ENCODE measurements at regions of chr15 and their contacts with region 1.

Region 1: GRCh38 chr15:74956648-74957300 is at the start of gene RPP25:
- DNase-seq: peak; percentile 77 to 97 (median 85)
- ATAC-seq: peak; percentile 91
- H3K4me3 ChIP-seq: peak within 1 kb of the TSS; percentile 57 to 59
- H3K27ac ChIP-seq: peak within 1 kb of the TSS; percentile 77 to 90
- H3K4me1 ChIP-seq: peaks cover 19 to 53% of the 10 kb centered on the region in 2 donors
- H3K27me3 ChIP-seq: peaks cover 0 to 68% of the 10 kb centered on the region in 2 donors
- CTCF ChIP-seq: no peak
- polyA plus RNA-seq, gene RPP25: 4.0 to 9.5 (median 6.0) TPM

Region 2: DNA sequence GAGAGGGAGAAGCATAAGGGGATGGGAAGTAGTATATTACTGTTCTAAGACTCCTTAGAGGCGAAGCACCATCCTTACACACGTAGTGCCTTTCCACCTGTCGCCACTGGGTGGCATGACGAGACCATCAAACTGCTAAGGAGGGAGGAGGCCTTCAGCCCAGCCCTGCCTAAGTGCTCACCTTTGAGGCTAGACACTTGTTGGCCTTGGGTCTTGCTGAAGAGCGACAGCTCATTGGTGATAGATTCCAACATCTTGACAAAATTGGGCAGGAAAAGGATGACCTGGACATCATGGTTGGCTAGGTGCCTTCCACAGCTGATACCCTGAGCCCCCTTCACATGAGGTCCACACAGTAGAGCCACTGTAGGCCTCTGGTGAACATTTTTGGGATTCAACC is 321.5 kb before region 1 on chr15:
- intact Hi-C with region 1: loop called in 1 of 2 experiments (anchors 10 kb)
- DNase-seq: peak in 1 of 4 donors; percentile 67
- ATAC-seq: peak; percentile 88
- H3K4me3 ChIP-seq: no peak overlapping the region
- H3K27ac ChIP-seq: no peak overlapping the region
- H3K4me1 ChIP-seq: peaks cover 0 to under 1% of the 10 kb centered on the region in 2 donors
- H3K27me3 ChIP-seq: no peaks in the 10 kb centered on the region
- CTCF ChIP-seq: peak; percentile 76 to 92